ENCODE measurements at regions of chr20 and their contacts with region 1.

Region 1: DNA sequence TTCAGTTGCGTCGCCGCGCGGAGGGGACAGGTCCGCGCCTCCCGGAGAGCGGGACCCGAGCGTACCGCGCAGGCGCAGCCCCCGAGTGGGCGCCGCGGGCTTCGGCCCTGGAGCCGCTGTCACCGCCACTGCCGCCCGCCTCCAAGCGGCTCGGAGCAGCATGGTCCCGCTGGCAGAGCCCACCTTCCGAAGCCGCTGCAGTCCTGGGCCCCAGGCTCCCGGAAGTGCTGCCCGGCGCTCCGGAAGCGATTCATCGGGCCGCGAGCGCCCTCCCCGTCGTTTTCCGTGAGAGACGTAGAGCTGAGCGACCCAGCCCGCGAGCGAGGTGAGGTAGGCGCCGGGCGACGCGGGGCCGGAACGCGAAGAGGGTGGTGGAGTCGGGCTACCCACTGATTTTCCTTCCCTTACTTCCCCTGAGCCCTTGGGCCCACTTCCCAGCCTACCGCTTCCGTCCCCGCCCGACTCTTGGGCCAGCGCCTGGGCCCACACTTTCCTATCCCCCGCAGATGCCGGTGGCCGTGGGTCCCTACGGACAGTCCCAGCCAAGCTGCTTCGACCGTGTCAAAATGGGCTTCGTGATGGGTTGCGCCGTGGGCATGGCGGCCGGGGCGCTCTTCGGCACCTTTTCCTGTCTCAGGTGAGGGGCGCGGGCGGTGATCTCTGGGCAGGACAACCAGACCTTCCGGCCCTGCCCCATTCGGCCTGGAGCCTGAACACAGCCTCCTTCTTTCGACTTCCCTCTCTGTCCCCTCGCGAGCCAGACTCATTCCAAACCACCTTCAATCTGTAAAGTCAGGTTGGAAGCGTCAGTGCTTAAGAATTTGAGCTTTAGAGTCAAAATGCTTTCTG is at the starts of genes NFS1 and ROMO1:
- DNase-seq: peak; percentile 80 to 90
- H3K4me3 ChIP-seq: peak within 1 kb of the TSS; percentile 94 to 95
- H3K27ac ChIP-seq: peak within 1 kb of the TSS; percentile 94 to 98
- H3K4me1 ChIP-seq: peaks cover 0 to 26% (median 17%) of the 10 kb centered on the region in 4 donors
- H3K27me3 ChIP-seq: no peaks in the 10 kb centered on the region
- CTCF ChIP-seq: peak; percentile 26 to 32

Region 2: GRCh38 chr20:35463455-35464300 is 235.7 kb before region 1 on chr20:
- intact Hi-C with region 1: loop called (anchors 10 kb)
- DNase-seq: peak in 1 of 2 donors; percentile 33
- H3K4me3 ChIP-seq: no peak overlapping the region
- H3K27ac ChIP-seq: no peak overlapping the region
- H3K4me1 ChIP-seq: peaks cover 0 to 11% (median 2%) of the 10 kb centered on the region in 4 donors
- H3K27me3 ChIP-seq: no peaks in the 10 kb centered on the region
- CTCF ChIP-seq: peak; percentile 73

Measured in tibial artery (tissue), 4 donors.